ENCODE measurements at regions of chr11 and their contacts with region 1.

Region 1: DNA sequence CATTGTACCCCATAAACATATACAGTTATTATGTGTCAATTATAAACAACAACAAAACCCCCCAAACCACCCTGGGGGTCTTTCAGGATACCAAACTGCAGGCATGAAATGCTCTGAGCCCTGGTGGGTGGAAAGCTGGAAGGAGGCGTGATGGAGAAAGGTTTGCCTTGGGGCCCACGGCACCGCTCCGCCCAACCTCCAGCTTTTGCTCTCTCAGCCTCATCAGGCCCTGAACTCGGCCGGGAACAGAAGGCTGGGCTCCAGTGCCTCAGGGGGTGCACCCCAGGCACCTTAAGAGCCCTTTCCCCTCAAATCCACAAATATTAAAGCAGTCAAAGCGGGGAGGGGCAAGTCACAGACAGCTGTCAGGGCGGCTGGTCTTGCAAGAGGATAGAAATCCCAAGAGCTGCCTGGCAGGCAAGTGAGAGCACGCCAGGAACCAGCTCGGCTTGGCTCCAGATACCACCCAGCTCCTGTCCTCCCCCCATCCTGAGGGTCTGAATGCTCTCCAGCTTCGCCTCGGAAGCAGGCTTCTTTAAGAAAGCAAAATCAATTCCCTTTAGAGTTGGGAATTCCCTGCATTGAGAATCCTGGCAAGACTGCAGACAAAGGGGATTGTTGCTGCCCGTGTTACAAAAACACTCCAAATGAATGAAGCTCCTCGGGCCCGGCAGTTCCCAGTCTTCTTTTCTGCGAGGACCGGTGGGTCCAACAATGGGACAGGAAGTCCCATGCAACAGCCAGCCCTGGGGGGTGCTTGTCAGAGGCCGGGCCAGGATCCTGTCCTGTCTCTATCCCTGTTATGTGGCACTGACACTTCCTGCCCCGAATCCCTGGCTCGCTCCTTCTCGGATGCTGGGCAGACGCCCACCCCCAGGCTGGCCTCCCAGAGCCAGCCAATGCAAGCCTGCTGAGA is 80.8 kb downstream of the NAT10 start:
- DNase-seq: peak in 2 of 10 donors; percentile 67 to 80

Region 2: GRCh38 chr11:34263440-34264172 is 77.4 kb after region 1 on chr11:
- intact Hi-C with region 1: loop called (anchors 5 kb)
- DNase-seq: peak in 2 of 10 donors; percentile 37 to 84